ENCODE measurements at regions of chr3 and their contacts with region 1.

Region 1: GRCh38 chr3:51955893-51956770 is 951 bp downstream of the GPR62 start:
- DNase-seq: peak; percentile 69
- H3K4me3 ChIP-seq: peak overlapping the region in 2 of 3 experiments; percentile 5 to 10
- H3K27ac ChIP-seq: no peak overlapping the region
- H3K4me1 ChIP-seq: no peaks in the 10 kb centered on the region
- H3K27me3 ChIP-seq: peaks cover 7 to 13% of the 10 kb centered on the region in 2 experiments
- CTCF ChIP-seq: peak; percentile 62 to 76
- POLR2A ChIP-seq: no peak

Region 2: DNA sequence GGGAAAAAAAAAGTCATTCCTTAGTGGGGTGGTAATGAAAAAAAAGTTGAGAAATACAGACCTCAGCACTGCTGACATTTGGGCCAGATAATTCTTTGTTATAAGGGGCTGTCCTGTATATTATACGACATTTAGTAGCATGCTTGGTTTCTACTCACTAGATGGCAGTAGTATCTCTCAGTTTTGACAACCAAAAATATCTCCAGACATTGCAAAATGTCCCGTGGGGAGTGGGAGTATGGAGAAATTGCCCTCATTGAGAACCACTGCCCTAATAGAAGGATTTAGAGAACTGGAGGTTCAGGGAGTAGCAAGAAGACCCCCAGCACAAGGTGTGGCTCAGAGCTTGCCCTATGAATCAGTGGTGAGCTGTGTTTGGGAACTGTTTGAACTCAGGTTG is 313.7 kb before region 1 on chr3:
- CTCF ChIA-PET with region 1: no interaction called
- POLR2A ChIA-PET with region 1: no interaction called
- dilution Hi-C with region 1: no loop called
- intact Hi-C with region 1: no loop called
- DNase-seq: peak; percentile 8
- H3K4me3 ChIP-seq: no peak overlapping the region
- H3K27ac ChIP-seq: no peak overlapping the region
- H3K4me1 ChIP-seq: no peaks in the 10 kb centered on the region
- H3K27me3 ChIP-seq: no peaks in the 10 kb centered on the region
- CTCF ChIP-seq: no peak
- POLR2A ChIP-seq: no peak

Region 3: DNA sequence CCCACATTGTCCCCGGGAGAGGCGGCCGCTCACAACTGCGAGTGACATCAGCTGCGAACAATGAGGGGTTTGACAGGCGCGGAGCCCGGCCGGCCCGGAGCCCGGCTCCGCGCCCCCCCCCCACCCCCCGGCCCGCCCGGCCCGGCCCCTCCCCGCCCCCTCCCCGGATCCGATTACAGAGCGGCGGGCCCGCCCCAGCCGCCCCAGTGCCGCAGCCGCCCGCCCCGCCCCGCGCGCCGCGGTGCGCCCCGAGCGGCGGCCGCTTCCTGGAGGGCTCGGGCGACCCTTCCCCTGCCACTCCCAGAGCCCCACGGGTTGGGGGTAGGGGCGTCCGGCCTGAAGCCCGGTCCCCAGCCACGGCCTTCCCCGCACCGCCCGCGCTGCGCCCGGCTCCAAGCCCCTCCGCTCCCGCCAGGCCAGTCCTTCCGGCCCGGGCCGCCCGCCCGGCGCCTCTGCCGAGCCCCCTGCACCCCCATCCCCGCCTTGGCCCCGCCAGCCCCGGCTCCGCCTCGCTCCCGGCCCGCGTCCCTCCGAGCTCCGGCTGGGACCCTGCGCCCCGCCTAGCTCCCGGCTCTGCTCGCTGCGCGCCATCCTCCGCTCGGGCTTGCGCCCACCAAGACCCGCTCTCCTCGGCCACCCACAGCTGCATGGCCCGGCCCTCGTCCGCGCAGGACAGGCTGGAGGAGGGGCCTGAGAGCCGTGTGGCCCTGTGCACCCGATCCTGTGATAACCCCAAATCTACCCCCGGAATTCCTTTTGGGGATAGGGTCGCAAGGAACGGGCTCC is 11.4 kb after region 1 on chr3 and contains the start of gene PCBP4:
- CTCF ChIA-PET with region 1: interaction called, 20 read pairs
- POLR2A ChIA-PET with region 1: no interaction called
- dilution Hi-C with region 1: no loop called
- intact Hi-C with region 1: loop called (anchors 1 kb)
- DNase-seq: peak; percentile 45
- H3K4me3 ChIP-seq: peak within 1 kb of the TSS; percentile 37 to 75 (median 68)
- H3K27ac ChIP-seq: peak within 1 kb of the TSS; percentile 59
- H3K4me1 ChIP-seq: peaks cover 4% of the 10 kb centered on the region
- H3K27me3 ChIP-seq: no peaks in the 10 kb centered on the region
- CTCF ChIP-seq: no peak
- POLR2A ChIP-seq: no peak
- total RNA-seq, gene PCBP4: 42.7 and 46.5 TPM in 2 replicates

Region 4: DNA sequence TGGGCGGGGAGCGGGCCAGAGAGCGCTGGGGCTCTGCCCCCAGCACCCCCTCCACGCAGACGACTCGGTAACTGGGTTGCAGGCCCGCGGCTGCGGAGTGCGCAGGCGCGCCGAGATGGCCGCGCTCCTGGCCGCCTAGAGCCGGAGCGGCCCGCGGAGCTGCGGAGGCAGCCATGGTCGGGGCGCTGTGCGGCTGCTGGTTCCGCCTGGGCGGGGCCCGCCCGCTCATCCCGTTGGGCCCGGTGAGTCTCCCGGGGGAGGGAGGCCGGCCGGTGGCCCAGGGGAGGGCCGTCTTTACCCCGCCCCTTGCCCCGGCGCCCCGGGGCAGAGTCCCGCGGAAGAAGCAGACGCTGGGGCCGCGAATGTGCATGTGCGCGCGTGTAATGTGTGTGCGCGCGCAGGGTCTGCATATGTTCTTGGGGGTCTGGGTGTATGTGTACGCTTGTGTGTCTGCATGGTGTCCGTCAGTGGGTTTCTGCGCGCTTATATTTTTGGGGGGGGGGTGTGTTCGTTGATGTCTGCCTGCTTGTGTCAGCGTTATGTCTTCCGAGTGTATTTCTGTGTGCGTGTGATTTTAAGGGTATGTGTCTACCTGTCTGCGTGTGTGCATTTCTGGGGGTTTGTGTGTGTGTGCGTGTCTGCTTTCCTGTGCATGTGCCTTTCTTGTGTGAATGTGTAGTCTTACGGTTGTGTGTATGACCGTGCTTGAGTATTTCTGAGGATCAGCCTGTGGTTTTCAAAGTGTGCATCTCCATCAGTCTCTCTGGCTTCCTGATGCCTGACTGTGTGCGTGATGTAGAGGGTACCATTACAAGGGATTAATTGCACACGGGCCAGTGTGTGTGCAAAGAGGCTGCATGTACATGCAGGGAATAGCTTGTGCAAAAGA is 19.1 kb after region 1 on chr3 and contains the start of gene ABHD14A:
- CTCF ChIA-PET with region 1: interaction called, 20 read pairs
- POLR2A ChIA-PET with region 1: no interaction called
- dilution Hi-C with region 1: no loop called
- intact Hi-C with region 1: loop called (anchors 1 kb)
- DNase-seq: peak; percentile 63
- H3K4me3 ChIP-seq: peak within 1 kb of the TSS; percentile 12 to 68 (median 63)
- H3K27ac ChIP-seq: peak within 1 kb of the TSS; percentile 55
- H3K4me1 ChIP-seq: peaks cover 22% of the 10 kb centered on the region
- H3K27me3 ChIP-seq: no peaks in the 10 kb centered on the region
- CTCF ChIP-seq: no peak
- POLR2A ChIP-seq: peak; percentile 87
- total RNA-seq, gene ABHD14A: 6.6 and 8.2 TPM in 2 replicates

Region 5: DNA sequence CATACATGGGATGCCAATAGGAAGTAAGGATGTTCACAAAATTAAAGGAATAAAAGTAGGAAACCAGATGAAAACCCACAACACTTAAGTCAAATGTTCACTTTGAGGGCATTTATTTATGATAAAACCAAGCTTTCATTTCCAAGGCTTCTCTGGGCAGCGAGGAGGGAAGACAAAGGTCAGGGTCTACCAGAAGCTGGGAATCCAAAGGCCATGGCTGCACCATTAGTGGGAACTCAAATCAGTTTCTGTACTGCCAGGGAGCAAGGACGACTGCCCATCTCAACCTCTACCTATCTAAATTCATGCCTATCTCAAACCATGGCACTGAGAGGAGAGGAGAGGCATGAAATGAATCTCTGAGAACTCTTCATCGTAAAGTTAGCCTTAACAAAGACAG is 707.0 kb after region 1 on chr3:
- CTCF ChIA-PET with region 1: no interaction called
- POLR2A ChIA-PET with region 1: no interaction called
- dilution Hi-C with region 1: no loop called
- intact Hi-C with region 1: no loop called
- DNase-seq: no peak
- H3K4me3 ChIP-seq: no peak overlapping the region
- H3K27ac ChIP-seq: no peak overlapping the region
- H3K4me1 ChIP-seq: peaks cover 6% of the 10 kb centered on the region
- H3K27me3 ChIP-seq: no peaks in the 10 kb centered on the region
- CTCF ChIP-seq: no peak
- POLR2A ChIP-seq: no peak

Measured in endothelial cell of umbilical vein (primary cell).